PC-9 (cell line): ENCODE measurements at regions of chr11 and their contacts with region 1.

Region 1: DNA sequence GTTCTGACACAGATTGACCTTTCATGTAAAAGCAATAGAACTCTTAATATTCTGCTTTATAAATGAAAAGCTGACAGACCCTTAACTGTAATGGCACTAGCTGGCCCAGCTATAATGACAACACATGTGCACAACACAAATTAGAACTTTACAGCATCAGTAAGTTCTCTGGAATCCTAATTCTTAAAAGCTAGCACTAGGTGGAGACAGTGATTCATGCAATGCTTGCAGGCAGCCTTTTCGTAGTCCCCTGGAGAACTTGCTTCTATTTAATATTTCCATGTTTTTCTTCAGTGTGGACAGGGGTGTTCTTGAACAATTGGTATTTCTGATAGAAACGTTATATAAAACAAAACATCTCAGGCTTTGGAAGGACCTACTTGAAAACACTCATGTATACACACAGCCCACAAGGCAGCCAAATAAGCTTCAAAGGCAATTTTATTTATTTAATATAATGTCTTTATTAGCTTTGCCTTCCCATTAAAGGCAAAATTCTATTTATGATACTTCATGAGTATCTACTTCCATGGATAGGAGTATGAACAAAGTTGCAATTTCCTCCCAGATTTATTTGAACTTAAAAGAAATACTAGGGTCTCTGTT is 374.3 kb upstream of the MPPED2 start:
- DNase-seq: no peak
- H3K4me3 ChIP-seq: no peak overlapping the region
- H3K27ac ChIP-seq: no peak overlapping the region
- H3K4me1 ChIP-seq: no peaks in the 10 kb centered on the region
- H3K27me3 ChIP-seq: no peaks in the 10 kb centered on the region
- CTCF ChIP-seq: peak; percentile 66

Region 2: DNA sequence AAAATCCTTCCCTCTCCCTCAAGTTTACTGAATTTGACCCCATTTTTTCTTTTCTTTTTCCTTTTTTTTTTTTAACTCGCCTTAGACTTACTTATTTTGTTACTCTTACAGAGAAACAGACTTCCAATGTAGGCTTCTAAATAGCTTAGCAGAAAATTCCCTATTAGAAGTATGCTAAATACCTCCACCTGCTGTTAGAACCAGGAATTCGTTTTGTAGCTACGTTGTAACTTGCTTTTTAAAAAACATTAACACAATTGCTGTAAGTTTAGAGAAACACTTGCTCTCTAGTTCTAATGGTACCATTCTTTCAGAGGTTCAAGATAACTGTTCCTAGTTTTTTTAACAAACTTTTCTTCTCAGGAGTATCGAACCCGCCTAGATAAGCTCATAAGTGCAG is 84.8 kb after region 1 on chr11:
- CTCF ChIA-PET with region 1: interaction called, 4 read pairs
- POLR2A ChIA-PET with region 1: no interaction called
- intact Hi-C with region 1: loop called (anchors 2 kb)
- DNase-seq: no peak
- H3K4me3 ChIP-seq: no peak overlapping the region
- H3K27ac ChIP-seq: no peak overlapping the region
- H3K4me1 ChIP-seq: no peaks in the 10 kb centered on the region
- H3K27me3 ChIP-seq: no peaks in the 10 kb centered on the region
- CTCF ChIP-seq: peak; percentile 30; the same call in 1 of the 2 replicates

Region 3: DNA sequence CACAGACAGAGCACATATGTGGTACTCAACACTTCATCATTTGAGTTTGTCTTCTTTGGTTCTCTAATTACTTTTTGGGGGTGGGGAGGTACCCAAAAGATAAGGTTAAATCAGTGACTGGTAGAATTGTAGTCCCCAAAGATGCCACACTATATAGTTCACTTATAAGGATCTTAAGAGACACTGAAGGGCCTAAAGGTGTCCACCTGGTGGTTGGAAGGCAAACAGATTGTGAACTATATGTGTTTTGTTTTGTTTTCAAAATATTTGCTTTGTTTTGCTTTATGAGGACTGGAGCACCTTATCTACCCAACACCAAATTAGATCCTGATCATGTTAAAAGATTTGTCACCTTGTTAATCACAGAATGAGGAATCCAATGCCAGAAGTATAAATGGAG is 272.9 kb after region 1 on chr11:
- CTCF ChIA-PET with region 1: no interaction called
- POLR2A ChIA-PET with region 1: no interaction called
- intact Hi-C with region 1: loop called (anchors 5 kb)
- DNase-seq: no peak
- H3K4me3 ChIP-seq: no peak overlapping the region
- H3K27ac ChIP-seq: no peak overlapping the region
- H3K4me1 ChIP-seq: no peaks in the 10 kb centered on the region
- H3K27me3 ChIP-seq: no peaks in the 10 kb centered on the region
- CTCF ChIP-seq: peak; percentile 61